ENCODE measurements at regions of chr13 and their contacts with region 1.

Region 1: DNA sequence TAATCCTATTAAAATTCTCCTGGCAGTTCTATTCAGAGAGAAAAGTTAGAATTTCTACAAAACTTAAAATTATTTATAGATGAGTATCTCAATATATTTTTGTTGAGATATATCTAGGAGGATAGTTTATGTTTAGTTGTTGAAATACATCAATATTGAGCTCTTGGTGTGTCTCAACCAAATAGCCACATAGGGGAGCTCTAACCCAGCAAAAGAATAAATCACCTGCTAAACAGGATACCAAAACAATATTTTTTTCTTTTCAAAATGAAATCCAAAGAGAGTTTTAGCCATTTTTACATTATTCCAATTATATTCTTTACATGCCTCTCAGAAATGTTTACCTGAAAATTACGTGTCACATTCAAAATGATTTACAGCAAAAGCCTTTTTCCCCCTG is 954.7 kb downstream of the SLITRK6 start:
- DNase-seq: no peak
- H3K4me3 ChIP-seq: no peak overlapping the region
- H3K27ac ChIP-seq: no peak overlapping the region
- H3K4me1 ChIP-seq: no peaks in the 10 kb centered on the region
- H3K27me3 ChIP-seq: no peaks in the 10 kb centered on the region
- CTCF ChIP-seq: no peak
- POLR2A ChIP-seq: no peak

Region 2: DNA sequence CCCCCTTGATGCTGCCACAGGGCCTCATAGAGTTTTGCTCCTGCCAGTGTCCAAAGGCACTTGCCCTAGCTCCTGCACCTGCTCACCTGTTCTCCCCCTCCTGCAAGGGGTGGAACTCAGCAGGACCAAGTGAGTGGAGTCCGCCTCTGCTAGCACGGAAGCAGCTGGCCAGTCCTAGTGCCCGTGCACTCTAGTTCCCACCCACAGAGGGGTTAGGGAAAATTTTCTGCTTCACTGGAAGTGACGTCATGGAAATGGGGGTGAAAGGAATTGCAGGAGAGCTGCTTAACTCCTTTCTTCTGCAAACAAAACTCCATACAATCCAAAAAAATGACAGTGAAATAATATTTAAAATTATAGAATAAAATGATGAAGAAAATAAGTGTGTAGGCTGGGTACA is 352.5 kb before region 1 on chr13:
- intact Hi-C with region 1: no loop called
- DNase-seq: no peak
- H3K4me3 ChIP-seq: no peak overlapping the region
- H3K27ac ChIP-seq: no peak overlapping the region
- H3K4me1 ChIP-seq: no peaks in the 10 kb centered on the region
- H3K27me3 ChIP-seq: no peaks in the 10 kb centered on the region
- CTCF ChIP-seq: no peak
- POLR2A ChIP-seq: no peak

Region 3: GRCh38 chr13:84684048-84684662 is 160.3 kb before region 1 on chr13:
- intact Hi-C with region 1: loop called (anchors 5 kb)
- DNase-seq: no peak
- H3K4me3 ChIP-seq: no peak overlapping the region
- H3K27ac ChIP-seq: peak overlapping the region in 1 of 2 donors; percentile 56
- H3K4me1 ChIP-seq: no peaks in the 10 kb centered on the region
- H3K27me3 ChIP-seq: no peaks in the 10 kb centered on the region
- CTCF ChIP-seq: no peak
- POLR2A ChIP-seq: no peak

Measured in breast epithelium (tissue), 4 donors.